ENCODE measurements at regions of chr7 and their contacts with region 1.

Region 1: GRCh38 chr7:117715784-117716445 is 157.3 kb downstream of the CTTNBP2 start:
- DNase-seq: peak; percentile 26
- ATAC-seq: peak; percentile 85
- H3K4me3 ChIP-seq: no peak overlapping the region
- H3K27ac ChIP-seq: no peak overlapping the region
- H3K4me1 ChIP-seq: no peaks in the 10 kb centered on the region
- H3K27me3 ChIP-seq: no peaks in the 10 kb centered on the region
- CTCF ChIP-seq: peak; percentile 62 to 69 (median 64); a peak in 5 of 6 replicates
- POLR2A ChIP-seq: no peak
- RAD21 ChIP-seq: peak; percentile 75

Region 2: GRCh38 chr7:117051808-117052207 is 664.1 kb before region 1 on chr7:
- CTCF ChIA-PET with region 1: no interaction called
- POLR2A ChIA-PET with region 1: no interaction called
- RAD21 ChIA-PET with region 1: no interaction called
- intact Hi-C with region 1: no loop called
- DNase-seq: no peak
- ATAC-seq: no peak
- H3K4me3 ChIP-seq: no peak overlapping the region
- H3K27ac ChIP-seq: no peak overlapping the region
- H3K4me1 ChIP-seq: no peaks in the 10 kb centered on the region
- H3K27me3 ChIP-seq: no peaks in the 10 kb centered on the region
- CTCF ChIP-seq: no peak
- POLR2A ChIP-seq: no peak
- RAD21 ChIP-seq: no peak

Region 3: DNA sequence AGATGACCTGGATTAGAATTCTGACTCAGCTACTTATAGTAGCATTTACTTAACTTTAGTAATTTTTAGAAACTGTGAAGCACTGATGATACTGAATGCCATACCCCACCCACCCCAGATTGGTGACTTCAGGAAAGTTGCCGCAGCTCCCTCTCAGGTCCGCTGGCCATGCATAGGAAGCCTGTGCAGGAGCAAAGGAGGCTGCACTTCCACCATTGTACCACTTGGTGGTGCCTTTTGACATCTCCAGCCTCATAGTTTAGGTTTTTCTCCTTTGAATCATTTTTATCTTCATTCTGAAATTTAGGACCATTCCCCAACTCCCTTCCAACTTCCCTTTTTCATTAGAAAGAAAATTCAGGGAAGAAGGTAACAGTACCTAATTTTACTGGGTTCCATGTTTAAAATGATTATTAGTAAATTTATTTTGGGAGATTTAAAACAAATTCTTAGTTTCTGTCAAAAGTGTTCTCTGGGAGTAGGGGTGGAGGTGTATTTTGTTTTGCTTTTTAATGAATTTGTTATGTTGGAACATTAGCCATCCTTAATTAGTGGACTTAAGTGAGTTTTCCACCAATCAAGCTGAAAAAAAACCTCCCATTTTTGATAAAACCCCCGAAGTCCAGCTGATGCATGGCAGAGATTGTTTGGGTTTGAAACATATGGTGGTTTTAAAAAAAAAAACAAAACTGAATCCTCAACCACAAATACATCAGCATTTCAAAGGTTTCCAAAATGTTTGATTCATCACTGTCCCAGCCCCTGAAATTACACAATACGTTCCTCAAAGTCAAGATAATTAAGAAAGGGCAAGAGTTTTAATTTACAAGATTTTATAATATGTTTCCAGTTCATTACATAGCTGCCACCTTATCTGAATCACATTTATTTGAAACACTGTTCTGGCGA is 502.7 kb before region 1 on chr7:
- CTCF ChIA-PET with region 1: interaction called, 8 read pairs
- POLR2A ChIA-PET with region 1: no interaction called
- RAD21 ChIA-PET with region 1: no interaction called
- intact Hi-C with region 1: loop called (anchors 1 kb)
- DNase-seq: peak; percentile 51
- ATAC-seq: peak; percentile 79
- H3K4me3 ChIP-seq: no peak overlapping the region
- H3K27ac ChIP-seq: no peak overlapping the region
- H3K4me1 ChIP-seq: no peaks in the 10 kb centered on the region
- H3K27me3 ChIP-seq: no peaks in the 10 kb centered on the region
- CTCF ChIP-seq: peak; percentile 55 to 93 (median 90); a peak in 5 of 6 replicates
- POLR2A ChIP-seq: no peak
- RAD21 ChIP-seq: peak; percentile 67

Region 4: GRCh38 chr7:117623606-117624005 is 92.3 kb before region 1 on chr7:
- CTCF ChIA-PET with region 1: no interaction called
- POLR2A ChIA-PET with region 1: no interaction called
- RAD21 ChIA-PET with region 1: no interaction called
- intact Hi-C with region 1: no loop called
- DNase-seq: no peak
- ATAC-seq: no peak
- H3K4me3 ChIP-seq: no peak overlapping the region
- H3K27ac ChIP-seq: no peak overlapping the region
- H3K4me1 ChIP-seq: no peaks in the 10 kb centered on the region
- H3K27me3 ChIP-seq: no peaks in the 10 kb centered on the region
- CTCF ChIP-seq: no peak
- POLR2A ChIP-seq: no peak
- RAD21 ChIP-seq: no peak

Region 5: DNA sequence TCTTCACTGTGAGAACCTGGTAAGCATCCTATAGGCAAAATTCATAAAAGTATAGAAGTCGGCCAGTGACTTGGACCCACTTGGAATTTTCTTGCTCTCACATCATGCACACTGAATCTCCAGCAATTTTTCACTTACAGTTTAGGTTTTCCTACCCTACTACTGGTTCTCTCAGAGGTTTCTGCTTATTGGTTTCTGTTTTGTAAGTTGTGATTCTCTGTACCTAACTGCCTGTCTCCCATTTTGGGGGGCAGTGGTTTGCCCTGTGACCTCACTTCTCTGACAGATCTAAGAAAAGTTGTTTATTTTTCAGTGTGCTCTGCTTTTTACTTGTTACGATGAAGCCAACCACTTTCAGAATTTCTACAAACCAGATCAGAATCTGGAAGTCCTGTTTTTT is 78.0 kb before region 1 on chr7:
- CTCF ChIA-PET with region 1: no interaction called
- POLR2A ChIA-PET with region 1: no interaction called
- RAD21 ChIA-PET with region 1: no interaction called
- intact Hi-C with region 1: no loop called
- DNase-seq: no peak
- ATAC-seq: no peak
- H3K4me3 ChIP-seq: no peak overlapping the region
- H3K27ac ChIP-seq: no peak overlapping the region
- H3K4me1 ChIP-seq: no peaks in the 10 kb centered on the region
- H3K27me3 ChIP-seq: no peaks in the 10 kb centered on the region
- CTCF ChIP-seq: no peak
- POLR2A ChIP-seq: no peak
- RAD21 ChIP-seq: no peak

Region 6: DNA sequence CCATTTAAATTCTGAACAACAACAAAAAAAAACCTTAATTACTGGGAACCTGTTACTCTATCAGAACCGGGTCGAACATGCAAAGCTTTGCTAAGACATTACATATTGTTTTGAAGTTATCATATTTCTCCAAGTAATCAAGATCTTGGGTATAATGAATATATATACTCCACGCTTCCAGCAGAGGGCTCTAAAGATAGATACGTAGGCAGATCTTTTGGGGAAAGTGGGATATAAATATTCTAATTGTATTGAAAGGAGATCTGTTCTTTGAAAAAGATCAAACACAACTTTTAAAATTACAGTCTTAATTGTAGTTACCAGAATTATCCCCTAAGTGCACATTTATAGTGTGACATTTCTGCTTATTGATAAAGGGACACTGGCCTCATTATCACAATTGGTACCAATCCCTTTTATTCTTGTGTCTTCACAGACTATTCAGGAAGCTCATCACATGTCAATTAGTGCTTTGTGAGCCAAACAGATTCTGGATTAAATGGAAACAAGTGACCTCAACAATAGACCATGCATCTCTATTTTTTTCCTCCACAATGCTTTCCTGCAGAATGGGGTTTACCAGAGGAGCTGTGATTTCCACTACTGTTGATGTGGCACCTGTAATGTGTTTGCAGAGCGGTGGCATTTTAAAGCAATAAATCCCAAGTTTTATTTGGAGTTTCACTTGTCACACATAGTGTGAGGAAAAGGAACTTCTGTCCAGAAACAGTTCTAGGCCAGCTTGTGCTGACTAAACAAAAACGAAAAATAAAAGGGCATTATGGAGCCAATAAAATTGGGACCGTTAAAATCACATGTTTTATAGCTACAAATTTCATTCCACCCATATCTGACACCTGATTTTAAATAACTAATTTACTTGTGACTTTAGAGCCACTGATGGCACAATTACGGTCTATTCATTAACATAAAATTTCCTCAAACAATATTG is 35.0 kb after region 1 on chr7:
- CTCF ChIA-PET with region 1: no interaction called
- POLR2A ChIA-PET with region 1: no interaction called
- RAD21 ChIA-PET with region 1: no interaction called
- intact Hi-C with region 1: no loop called
- DNase-seq: no peak
- ATAC-seq: no peak
- H3K4me3 ChIP-seq: no peak overlapping the region
- H3K27ac ChIP-seq: no peak overlapping the region
- H3K4me1 ChIP-seq: no peaks in the 10 kb centered on the region
- H3K27me3 ChIP-seq: no peaks in the 10 kb centered on the region
- CTCF ChIP-seq: peak; percentile 38 to 70 (median 52); a peak in 5 of 6 replicates
- POLR2A ChIP-seq: no peak
- RAD21 ChIP-seq: peak; percentile 59